Heart right ventricle (tissue), 16 donors: ENCODE measurements at regions of chr6 and their contacts with region 1.

Region 1: DNA sequence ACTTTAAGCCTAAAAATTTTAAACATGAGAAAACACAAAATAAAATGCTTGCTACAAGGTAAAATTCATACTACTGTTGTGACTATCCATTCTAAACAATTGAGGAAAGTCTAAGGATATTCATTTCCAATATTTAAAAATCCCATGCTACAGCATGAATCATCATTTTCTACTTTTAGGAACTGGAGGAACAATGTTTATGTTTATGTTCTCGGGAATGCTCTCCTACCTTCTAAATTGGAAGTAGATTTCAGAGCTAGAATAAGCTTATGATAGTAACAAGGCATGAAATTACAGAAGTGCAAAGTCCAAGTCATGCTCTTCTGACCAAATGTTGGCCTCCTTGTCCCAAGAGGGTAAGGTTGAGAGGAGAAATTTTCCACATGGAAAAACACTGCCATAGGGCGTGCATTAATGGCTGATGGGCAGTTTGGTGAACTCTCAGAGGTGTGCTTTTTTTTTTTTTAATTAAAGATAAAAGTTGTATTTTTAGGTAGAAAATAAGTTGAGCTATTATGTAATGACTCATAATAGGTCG is 6.0 kb upstream of the MYLK4 start:
- DNase-seq: no peak
- ATAC-seq: no peak
- H3K4me3 ChIP-seq: no peak overlapping the region
- H3K27ac ChIP-seq: peak overlapping the region in 1 of 10 donors; percentile 43
- H3K4me1 ChIP-seq: peaks cover 0 to 15% (median 0%) of the 10 kb centered on the region in 9 donors
- H3K27me3 ChIP-seq: no peaks in the 10 kb centered on the region
- CTCF ChIP-seq: no peak

Region 2: DNA sequence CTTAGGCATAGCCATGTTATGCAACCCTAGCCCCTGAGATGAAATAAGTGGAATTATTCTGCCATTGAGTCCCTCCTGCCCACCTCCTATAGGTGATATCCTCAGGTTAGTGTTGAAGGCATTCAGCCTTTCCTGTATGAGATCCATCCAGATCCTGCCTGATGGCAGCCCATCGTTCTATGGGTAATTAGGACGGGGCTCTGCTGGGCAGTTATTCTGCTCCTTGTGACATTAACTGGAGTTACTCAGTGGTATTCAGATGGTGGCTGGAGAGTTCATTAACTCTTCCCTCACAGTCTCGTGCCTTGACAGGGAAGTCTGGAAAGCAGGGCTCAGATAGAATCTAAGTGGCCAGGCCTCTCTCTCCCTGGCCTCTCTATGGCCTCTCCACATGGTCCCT is 502.0 kb before region 1 on chr6:
- intact Hi-C with region 1: loop called in 1 of 10 experiments (anchors 5 kb)
- DNase-seq: no peak
- ATAC-seq: no peak
- H3K4me3 ChIP-seq: no peak overlapping the region
- H3K27ac ChIP-seq: no peak overlapping the region
- H3K4me1 ChIP-seq: no peaks in the 10 kb centered on the region
- H3K27me3 ChIP-seq: no peaks in the 10 kb centered on the region
- CTCF ChIP-seq: no peak